Ascending aorta (tissue), 2 donors: ENCODE measurements at regions of chr13 and their contacts with region 1.

Region 1: DNA sequence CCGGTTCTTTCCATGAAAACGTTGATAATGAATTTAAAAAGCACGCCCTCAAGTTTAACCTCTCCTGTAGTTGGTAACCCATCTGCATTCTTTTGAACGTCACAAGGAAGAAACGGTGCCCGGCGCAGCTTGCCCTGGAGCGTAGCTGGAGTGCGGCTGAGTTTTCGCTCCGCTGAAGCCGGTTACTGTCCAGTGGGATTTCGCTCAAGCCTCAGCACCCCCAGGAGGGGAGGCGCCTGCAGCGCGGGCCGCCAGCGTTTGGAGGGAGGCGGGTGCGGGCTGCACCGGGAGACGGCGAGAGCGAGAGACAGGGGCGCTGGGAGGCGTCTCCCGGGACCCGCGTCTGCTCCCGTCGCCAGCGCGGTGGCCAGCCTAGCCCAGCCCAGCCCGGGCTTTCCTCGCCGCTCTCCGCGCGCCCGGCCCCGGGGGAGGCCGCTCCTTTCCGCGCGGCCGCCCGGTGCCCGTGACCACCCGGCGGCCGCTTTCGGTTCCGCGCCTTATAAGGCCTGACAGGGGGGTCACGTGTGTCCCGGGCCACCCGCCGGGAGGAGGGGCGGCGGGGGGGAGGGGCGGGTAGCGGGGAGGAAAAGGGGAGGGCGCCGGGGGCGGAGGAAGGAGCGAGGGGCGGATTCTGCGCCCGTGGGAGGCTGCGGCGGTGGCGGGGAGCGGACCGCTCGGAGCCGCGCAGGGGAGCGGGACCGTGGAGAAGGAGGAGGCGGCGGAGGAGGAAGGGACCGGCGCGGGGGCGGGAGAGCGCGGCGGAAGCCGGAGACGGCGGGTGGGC is 8.3 kb upstream of the DGKH start:
- DNase-seq: peak; percentile 65 to 95
- H3K4me3 ChIP-seq: peak overlapping the region; percentile 78 to 91
- H3K27ac ChIP-seq: peak overlapping the region; percentile 92 to 97
- H3K4me1 ChIP-seq: peaks cover 0 to 8% of the 10 kb centered on the region in 2 donors
- H3K27me3 ChIP-seq: no peaks in the 10 kb centered on the region
- CTCF ChIP-seq: no peak

Region 2: GRCh38 chr13:41310963-41311606 is 729.1 kb before region 1 on chr13 and contains the start of gene NAA16:
- intact Hi-C with region 1: loop called (anchors 2 kb)
- DNase-seq: peak; percentile 53 to 95
- H3K4me3 ChIP-seq: peak within 1 kb of the TSS; percentile 92 to 94
- H3K27ac ChIP-seq: peak within 1 kb of the TSS; percentile 93 to 96
- H3K4me1 ChIP-seq: peaks cover 0 to 12% of the 10 kb centered on the region in 2 donors
- H3K27me3 ChIP-seq: no peaks in the 10 kb centered on the region
- CTCF ChIP-seq: peak; percentile 2 to 8 (median 4)
- total RNA-seq, gene NAA16: 11.9 TPM

Region 3: DNA sequence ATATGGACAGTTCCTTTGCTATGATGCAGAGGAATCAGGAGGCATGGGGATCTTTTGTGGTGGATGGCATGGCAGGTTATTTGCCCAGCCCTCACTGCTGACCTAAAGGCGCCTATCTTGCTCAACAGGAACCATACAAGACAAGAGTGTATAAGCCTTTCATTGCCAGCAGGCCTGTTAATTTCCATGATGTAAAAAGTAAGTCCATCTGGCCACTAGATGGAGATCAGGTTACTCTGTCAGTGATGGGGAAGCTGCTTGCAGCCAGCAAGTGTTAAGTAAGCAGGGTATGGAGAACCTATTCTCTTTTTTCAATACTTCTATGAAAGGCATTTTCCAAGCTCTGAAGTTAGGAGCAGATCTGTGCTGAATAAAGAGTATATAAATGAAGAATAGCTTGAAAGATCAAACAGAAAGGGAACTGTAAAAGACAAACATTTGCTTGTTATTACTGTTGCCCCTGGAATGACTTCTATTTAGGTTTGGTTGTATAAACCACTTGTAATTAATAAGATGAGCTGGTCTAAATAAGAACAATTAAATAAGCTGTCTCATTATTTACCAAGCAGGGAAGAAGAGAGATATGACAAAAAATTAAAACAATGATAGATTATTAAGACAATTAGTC is 371.9 kb before region 1 on chr13:
- intact Hi-C with region 1: loop called (anchors 5 kb)
- DNase-seq: peak in 1 of 2 donors; percentile 80
- H3K4me3 ChIP-seq: no peak overlapping the region
- H3K27ac ChIP-seq: no peak overlapping the region
- H3K4me1 ChIP-seq: no peaks in the 10 kb centered on the region
- H3K27me3 ChIP-seq: no peaks in the 10 kb centered on the region
- CTCF ChIP-seq: peak; percentile 72 to 88 (median 83)

Region 4: GRCh38 chr13:41960639-41961465 is 79.3 kb before region 1 on chr13 and contains the start of gene VWA8:
- intact Hi-C with region 1: loop called (anchors 1 kb)
- DNase-seq: peak in 1 of 2 donors; percentile 87
- H3K4me3 ChIP-seq: peak within 1 kb of the TSS; percentile 81 to 89
- H3K27ac ChIP-seq: peak within 1 kb of the TSS; percentile 85 to 91
- H3K4me1 ChIP-seq: peaks cover 0 to 10% of the 10 kb centered on the region in 2 donors
- H3K27me3 ChIP-seq: no peaks in the 10 kb centered on the region
- CTCF ChIP-seq: no peak
- total RNA-seq, gene VWA8: 10.4 TPM